CD8-positive, alpha-beta T cell (primary cell): ENCODE measurements at regions of chr12 and their contacts with region 1.

Region 1: DNA sequence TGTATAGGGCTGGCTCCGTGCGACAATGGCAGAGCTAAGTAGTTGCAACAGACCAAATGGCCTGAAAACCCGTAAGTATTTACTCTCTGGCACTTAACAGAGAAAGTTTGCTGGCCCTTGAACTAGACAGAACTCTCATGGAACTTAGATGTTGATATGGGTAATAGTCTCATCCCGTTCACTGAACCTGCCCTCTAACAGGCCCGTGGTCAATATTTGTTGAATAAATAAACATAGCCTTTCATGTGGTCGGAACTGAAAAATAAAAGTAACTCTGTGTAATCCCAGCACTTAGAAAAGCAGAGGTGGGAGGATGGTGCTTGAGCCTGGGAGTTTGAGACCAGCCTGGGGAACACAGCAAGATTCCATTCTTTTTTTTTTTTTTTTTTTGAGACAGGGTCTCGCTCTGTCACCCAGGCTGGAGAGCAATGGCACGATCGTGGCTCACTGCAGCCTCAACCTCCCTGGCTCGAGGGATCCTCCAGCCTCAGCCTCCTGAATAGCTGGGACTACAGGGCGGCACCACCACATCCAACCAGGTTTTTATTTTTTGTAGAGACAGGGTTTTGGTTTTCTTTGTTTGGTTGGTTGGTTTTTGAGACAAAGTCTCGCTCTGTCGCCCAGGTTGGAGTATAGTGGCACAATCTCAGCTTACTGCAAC is 29.7 kb downstream of the KDM2B start:
- DNase-seq: no peak
- ATAC-seq: no peak
- H3K4me3 ChIP-seq: no peak overlapping the region
- H3K4me3 Mint-ChIP-seq: no peak overlapping the region
- H3K27ac ChIP-seq: peak overlapping the region in 1 of 2 experiments; percentile 71
- H3K27ac Mint-ChIP-seq: peak overlapping the region; percentile 85
- H3K4me1 ChIP-seq: no peaks in the 10 kb centered on the region
- H3K4me1 Mint-ChIP-seq: peaks cover 6% of the 10 kb centered on the region
- H3K27me3 ChIP-seq: no peaks in the 10 kb centered on the region
- H3K27me3 Mint-ChIP-seq: no peaks in the 10 kb centered on the region
- CTCF ChIP-seq: no peak

Region 2: GRCh38 chr12:121443193-121443870 is 107.8 kb before region 1 on chr12:
- CTCF ChIA-PET with region 1: no interaction called
- POLR2A ChIA-PET with region 1: no interaction called
- intact Hi-C with region 1: no loop called
- DNase-seq: peak; percentile 43 to 74 (median 67)
- ATAC-seq: peak; percentile 80
- H3K4me3 ChIP-seq: no peak overlapping the region
- H3K4me3 Mint-ChIP-seq: no peak overlapping the region
- H3K27ac ChIP-seq: no peak overlapping the region
- H3K27ac Mint-ChIP-seq: peak overlapping the region; percentile 79
- H3K4me1 ChIP-seq: no peaks in the 10 kb centered on the region
- H3K4me1 Mint-ChIP-seq: peaks cover 5% of the 10 kb centered on the region
- H3K27me3 ChIP-seq: no peaks in the 10 kb centered on the region
- H3K27me3 Mint-ChIP-seq: no peaks in the 10 kb centered on the region
- CTCF ChIP-seq: peak; percentile 76

Region 3: DNA sequence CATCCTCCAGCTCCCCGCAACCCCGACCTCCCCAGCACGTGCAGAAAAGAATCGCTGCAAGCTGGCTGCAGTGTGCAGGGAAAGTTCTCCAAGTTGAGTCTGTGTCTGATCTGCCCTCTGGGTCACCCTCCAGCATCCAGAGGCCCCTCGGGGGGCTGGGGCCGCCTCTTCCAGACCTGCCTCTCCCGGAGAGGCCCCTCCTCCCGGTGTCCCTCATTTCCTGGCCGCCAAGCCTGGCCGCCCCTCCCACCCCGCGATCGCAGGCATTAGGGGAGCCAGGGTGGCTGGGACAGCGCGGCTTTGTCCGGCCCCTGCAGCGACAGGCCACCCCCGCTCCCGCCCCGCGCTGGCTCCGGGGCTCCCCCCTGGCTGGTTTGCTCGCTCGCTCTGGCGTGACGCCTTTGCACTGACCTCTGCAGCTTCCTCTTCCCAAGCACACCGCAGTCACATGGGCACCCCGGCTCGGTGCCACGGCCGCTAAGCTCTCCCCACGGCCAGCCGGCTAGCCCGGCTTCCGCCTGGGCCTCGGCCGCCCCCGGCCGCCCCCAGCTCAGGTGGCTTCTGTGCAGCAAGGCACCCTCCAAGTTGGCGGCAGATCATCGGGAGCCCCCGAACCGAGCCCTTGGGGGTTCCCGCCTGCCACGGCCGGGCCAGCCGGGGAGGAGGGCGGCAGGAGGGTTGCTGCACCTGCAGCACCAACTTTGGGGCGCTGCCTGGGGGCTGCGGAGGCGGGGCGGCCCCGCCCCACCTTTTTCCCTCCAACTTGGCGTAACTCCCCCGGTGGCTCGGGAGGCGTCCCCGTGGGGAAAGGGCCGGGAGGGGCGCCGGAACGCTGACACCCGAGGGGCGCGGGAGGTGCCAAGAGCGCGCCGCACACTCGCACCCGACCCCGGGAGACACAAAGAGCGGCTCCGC is 13.9 kb before region 1 on chr12:
- CTCF ChIA-PET with region 1: interaction called, 13 read pairs
- POLR2A ChIA-PET with region 1: interaction called, 4 read pairs
- intact Hi-C with region 1: no loop called
- DNase-seq: peak in 8 of 9 experiments; percentile 22 to 83 (median 58)
- ATAC-seq: peak; percentile 5
- H3K4me3 ChIP-seq: peak overlapping the region; percentile 52 to 68
- H3K4me3 Mint-ChIP-seq: peak overlapping the region; percentile 80
- H3K27ac ChIP-seq: peak overlapping the region; percentile 80 to 83
- H3K27ac Mint-ChIP-seq: peak overlapping the region; percentile 96
- H3K4me1 ChIP-seq: peaks cover 34% of the 10 kb centered on the region
- H3K4me1 Mint-ChIP-seq: peaks cover 43% of the 10 kb centered on the region
- H3K27me3 ChIP-seq: no peaks in the 10 kb centered on the region
- H3K27me3 Mint-ChIP-seq: no peaks in the 10 kb centered on the region
- CTCF ChIP-seq: no peak

Region 4: GRCh38 chr12:121579981-121580868 is 29.1 kb after region 1 on chr12:
- CTCF ChIA-PET with region 1: interaction called, 22 read pairs
- POLR2A ChIA-PET with region 1: interaction called, 7 read pairs
- intact Hi-C with region 1: loop called in 1 of 2 experiments (anchors 2 kb)
- DNase-seq: peak; percentile 63 to 91 (median 82)
- ATAC-seq: peak; percentile 62
- H3K4me3 ChIP-seq: peak overlapping the region; percentile 58 to 73
- H3K4me3 Mint-ChIP-seq: peak overlapping the region; percentile 95
- H3K27ac ChIP-seq: peak overlapping the region; percentile 84 to 85
- H3K27ac Mint-ChIP-seq: peak overlapping the region; percentile 98
- H3K4me1 ChIP-seq: peaks cover 42% of the 10 kb centered on the region
- H3K4me1 Mint-ChIP-seq: peaks cover 51% of the 10 kb centered on the region
- H3K27me3 ChIP-seq: no peaks in the 10 kb centered on the region
- H3K27me3 Mint-ChIP-seq: no peaks in the 10 kb centered on the region
- CTCF ChIP-seq: no peak

Region 5: GRCh38 chr12:121611306-121611705 is 60.2 kb after region 1 on chr12:
- CTCF ChIA-PET with region 1: interaction called, 11 read pairs
- POLR2A ChIA-PET with region 1: interaction called, 3 read pairs
- intact Hi-C with region 1: no loop called
- DNase-seq: peak in 3 of 9 experiments; percentile 17 to 43 (median 33)
- ATAC-seq: peak; percentile 38
- H3K4me3 ChIP-seq: no peak overlapping the region
- H3K4me3 Mint-ChIP-seq: no peak overlapping the region
- H3K27ac ChIP-seq: no peak overlapping the region
- H3K27ac Mint-ChIP-seq: no peak overlapping the region
- H3K4me1 ChIP-seq: no peaks in the 10 kb centered on the region
- H3K4me1 Mint-ChIP-seq: peaks cover 5% of the 10 kb centered on the region
- H3K27me3 ChIP-seq: no peaks in the 10 kb centered on the region
- H3K27me3 Mint-ChIP-seq: no peaks in the 10 kb centered on the region
- CTCF ChIP-seq: no peak

Region 6: DNA sequence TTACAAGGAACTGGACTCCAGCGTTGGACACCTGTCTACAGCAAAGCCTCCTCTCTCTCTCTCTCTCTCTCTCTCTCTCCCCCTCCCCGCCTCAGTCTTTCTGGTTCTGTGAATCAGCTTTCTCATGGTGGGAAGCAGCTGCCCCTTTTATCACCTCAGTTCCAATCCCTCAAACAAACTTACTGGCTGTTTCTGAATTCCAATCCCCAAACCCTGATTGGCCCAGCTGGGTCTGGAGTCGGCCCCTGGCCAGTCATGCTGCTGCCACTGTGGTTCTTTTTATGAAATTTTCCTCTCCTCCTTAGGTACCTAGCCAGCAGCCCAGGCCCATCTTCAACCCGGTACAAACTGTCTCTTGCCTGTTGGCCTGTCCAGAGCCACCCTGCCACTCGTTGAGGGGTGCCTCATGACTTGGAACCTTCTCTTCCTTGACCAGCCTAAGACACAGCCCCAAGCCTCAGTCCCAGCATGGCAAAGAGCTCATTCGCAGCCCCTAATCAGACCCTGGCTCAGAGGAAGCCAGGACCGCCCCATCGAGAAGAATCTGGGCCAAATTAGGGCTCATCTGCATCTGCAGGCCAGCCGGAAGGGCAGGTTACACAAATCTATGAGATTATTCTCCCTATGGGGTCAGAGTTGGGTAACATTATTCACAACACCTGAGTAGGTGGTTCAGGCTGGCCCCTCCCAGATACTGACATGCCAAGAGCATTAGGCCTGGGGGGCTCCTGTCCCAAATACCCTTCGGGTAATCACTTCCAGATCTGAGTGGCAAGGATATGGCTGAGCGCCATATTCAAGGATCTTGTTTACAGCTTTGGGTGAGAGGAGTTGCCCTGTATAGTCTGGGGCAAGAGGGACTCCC is 127.8 kb after region 1 on chr12:
- CTCF ChIA-PET with region 1: interaction called, 53 read pairs
- POLR2A ChIA-PET with region 1: interaction called, 3 read pairs
- intact Hi-C with region 1: loop called (anchors 1 kb)
- DNase-seq: no peak
- ATAC-seq: no peak
- H3K4me3 ChIP-seq: no peak overlapping the region
- H3K4me3 Mint-ChIP-seq: no peak overlapping the region
- H3K27ac ChIP-seq: no peak overlapping the region
- H3K27ac Mint-ChIP-seq: peak overlapping the region; percentile 83
- H3K4me1 ChIP-seq: peaks cover 5% of the 10 kb centered on the region
- H3K4me1 Mint-ChIP-seq: peaks cover 12% of the 10 kb centered on the region
- H3K27me3 ChIP-seq: no peaks in the 10 kb centered on the region
- H3K27me3 Mint-ChIP-seq: no peaks in the 10 kb centered on the region
- CTCF ChIP-seq: no peak

Region 7: DNA sequence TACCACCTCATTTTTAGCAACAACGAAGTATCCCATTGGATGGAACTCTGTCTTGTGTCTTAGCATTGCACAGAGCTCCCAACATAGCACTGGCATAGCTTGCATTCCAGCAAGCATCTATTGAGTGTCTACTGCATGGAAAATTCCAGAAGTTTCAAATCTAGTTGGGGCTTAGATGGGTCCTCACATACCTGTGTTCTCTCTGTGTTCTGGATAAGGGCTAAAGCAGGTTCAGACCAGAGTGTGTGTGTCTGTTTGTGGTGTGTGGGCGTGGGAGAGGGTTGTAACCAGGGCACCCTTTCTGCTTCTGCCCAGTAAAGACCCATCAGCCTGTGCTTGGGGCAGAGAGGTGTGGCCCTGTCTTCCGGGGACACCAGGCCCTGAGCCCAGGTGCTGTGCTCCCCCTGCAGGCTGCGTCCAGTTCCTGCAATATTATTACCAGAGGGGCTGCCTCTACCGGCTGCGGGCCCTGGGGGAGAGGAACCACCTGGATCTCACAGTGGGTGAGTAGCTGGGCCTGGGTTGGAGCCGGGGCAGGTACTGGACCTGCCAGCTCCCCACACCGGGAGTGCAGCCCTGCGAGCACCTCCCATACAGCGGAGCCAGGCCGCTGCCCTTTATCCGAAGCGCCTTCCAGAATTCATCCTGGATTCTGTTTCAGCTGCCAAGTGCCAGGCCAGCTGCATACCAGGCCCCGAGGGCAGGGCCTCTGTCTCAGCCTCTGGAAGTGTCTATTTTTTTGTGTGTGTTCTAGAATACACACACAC is 222.1 kb after region 1 on chr12:
- CTCF ChIA-PET with region 1: interaction called, 16 read pairs
- POLR2A ChIA-PET with region 1: no interaction called
- intact Hi-C with region 1: loop called in 1 of 2 experiments (anchors 2 kb)
- DNase-seq: peak; percentile 63 to 88 (median 80)
- ATAC-seq: peak; percentile 90
- H3K4me3 ChIP-seq: no peak overlapping the region
- H3K4me3 Mint-ChIP-seq: no peak overlapping the region
- H3K27ac ChIP-seq: peak overlapping the region in 1 of 2 experiments; percentile 32
- H3K27ac Mint-ChIP-seq: peak overlapping the region; percentile 57
- H3K4me1 ChIP-seq: peaks cover 29% of the 10 kb centered on the region
- H3K4me1 Mint-ChIP-seq: peaks cover 16% of the 10 kb centered on the region
- H3K27me3 ChIP-seq: no peaks in the 10 kb centered on the region
- H3K27me3 Mint-ChIP-seq: no peaks in the 10 kb centered on the region
- CTCF ChIP-seq: peak; percentile 82

Region 8: DNA sequence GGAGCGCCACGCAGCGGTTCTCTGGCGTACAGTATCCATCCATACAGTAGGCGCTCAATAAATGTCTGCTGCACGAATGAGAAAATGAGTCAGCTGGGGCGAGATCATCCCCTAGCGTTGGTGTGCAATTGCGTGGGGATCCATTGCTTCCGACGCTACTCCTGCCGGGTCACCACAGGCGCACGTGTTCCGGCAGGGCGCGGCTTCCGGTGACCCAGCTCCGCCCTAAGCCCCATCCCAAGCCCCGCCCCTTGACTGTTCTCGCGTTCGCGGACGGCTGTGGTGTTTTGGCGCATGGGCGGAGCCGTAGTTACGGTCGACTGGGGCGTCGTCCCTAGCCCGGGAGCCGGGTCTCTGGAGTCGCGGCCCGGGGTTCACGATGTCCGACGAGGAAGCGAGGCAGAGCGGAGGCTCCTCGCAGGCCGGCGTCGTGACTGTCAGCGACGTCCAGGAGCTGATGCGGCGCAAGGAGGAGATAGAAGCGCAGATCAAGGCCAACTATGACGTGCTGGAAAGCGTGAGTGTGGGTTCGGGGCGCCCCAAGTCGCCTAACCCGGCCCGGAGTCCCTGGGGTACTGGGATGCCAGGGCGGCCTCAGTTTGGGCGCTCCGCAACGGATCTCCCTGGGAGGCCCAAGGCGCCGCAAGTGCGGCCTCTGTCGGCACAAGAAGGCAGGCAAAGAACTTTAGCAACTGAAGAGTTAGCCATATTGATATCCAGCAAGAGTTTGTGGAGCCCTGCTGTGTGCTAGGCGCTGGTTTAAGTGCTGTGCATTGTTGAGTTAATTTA is 337.6 kb after region 1 on chr12 and contains the start of gene PSMD9:
- CTCF ChIA-PET with region 1: no interaction called
- POLR2A ChIA-PET with region 1: no interaction called
- intact Hi-C with region 1: no loop called
- DNase-seq: peak; percentile 96 to 99 (median 99)
- ATAC-seq: peak; percentile 93
- H3K4me3 ChIP-seq: peak within 1 kb of the TSS; percentile 72 to 80
- H3K4me3 Mint-ChIP-seq: peak within 1 kb of the TSS; percentile 99
- H3K27ac ChIP-seq: peak within 1 kb of the TSS; percentile 88 to 92
- H3K27ac Mint-ChIP-seq: peak within 1 kb of the TSS; percentile 99
- H3K4me1 ChIP-seq: peaks cover 32% of the 10 kb centered on the region
- H3K4me1 Mint-ChIP-seq: peaks cover 35% of the 10 kb centered on the region
- H3K27me3 ChIP-seq: no peaks in the 10 kb centered on the region
- H3K27me3 Mint-ChIP-seq: no peaks in the 10 kb centered on the region
- CTCF ChIP-seq: peak; percentile 27
- total RNA-seq, gene PSMD9: 38.7 to 42.2 TPM